Natural killer cell (primary cell): ENCODE measurements at regions of chr7 and their contacts with region 1.

Region 1: GRCh38 chr7:24907311-24907886 is 72.6 kb downstream of the OSBPL3 start:
- DNase-seq: peak in 1 of 2 donors; percentile 63
- ATAC-seq: peak; percentile 49 to 65 (median 60)
- H3K4me3 ChIP-seq: no peak overlapping the region
- H3K4me3 Mint-ChIP-seq: no peak overlapping the region
- H3K27ac ChIP-seq: peak overlapping the region; percentile 15
- H3K27ac Mint-ChIP-seq: no peak overlapping the region
- H3K4me1 ChIP-seq: peaks cover 57% of the 10 kb centered on the region
- H3K4me1 Mint-ChIP-seq: peaks cover 54 to 57% of the 10 kb centered on the region in 2 donors
- H3K27me3 ChIP-seq: no peaks in the 10 kb centered on the region
- H3K27me3 Mint-ChIP-seq: no peaks in the 10 kb centered on the region
- CTCF ChIP-seq: no peak

Region 2: DNA sequence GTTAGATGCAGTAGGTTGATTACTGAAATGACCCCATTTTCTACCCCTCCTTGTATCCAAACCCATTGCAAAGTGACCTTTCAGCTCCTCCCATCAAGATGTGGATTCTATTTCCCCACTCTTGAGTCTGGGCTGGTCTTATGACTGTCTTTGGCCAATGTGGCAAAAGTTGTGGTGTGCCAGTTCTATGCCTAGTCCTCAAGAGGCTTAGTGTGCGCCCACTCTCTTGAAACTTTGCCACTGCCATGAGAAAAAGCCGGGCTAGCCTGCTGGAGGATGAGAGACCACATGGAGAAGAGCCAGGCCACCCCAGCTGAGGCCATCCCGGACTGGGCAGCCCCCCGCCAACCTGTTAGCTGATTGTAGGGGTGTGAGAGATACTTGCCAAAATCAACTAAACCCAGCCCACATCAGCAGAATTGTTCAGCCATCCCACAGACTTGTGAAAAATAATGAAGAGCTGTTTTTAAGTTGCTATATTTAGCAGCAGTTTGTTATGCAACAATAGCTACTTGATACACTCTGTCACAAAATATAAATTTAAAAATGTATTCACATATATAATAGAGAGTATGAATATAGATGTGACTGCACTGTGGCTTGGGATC is 465.1 kb before region 1 on chr7:
- intact Hi-C with region 1: loop called (anchors 10 kb)
- DNase-seq: peak; percentile 30 to 47
- ATAC-seq: peak; percentile 79 to 84 (median 82)
- H3K4me3 ChIP-seq: no peak overlapping the region
- H3K4me3 Mint-ChIP-seq: peak overlapping the region; percentile 90
- H3K27ac ChIP-seq: peak overlapping the region; percentile 79
- H3K27ac Mint-ChIP-seq: peak overlapping the region; percentile 82 to 94
- H3K4me1 ChIP-seq: peaks cover 18% of the 10 kb centered on the region
- H3K4me1 Mint-ChIP-seq: peaks cover 32 to 40% of the 10 kb centered on the region in 2 donors
- H3K27me3 ChIP-seq: no peaks in the 10 kb centered on the region
- H3K27me3 Mint-ChIP-seq: no peaks in the 10 kb centered on the region
- CTCF ChIP-seq: no peak

Region 3: DNA sequence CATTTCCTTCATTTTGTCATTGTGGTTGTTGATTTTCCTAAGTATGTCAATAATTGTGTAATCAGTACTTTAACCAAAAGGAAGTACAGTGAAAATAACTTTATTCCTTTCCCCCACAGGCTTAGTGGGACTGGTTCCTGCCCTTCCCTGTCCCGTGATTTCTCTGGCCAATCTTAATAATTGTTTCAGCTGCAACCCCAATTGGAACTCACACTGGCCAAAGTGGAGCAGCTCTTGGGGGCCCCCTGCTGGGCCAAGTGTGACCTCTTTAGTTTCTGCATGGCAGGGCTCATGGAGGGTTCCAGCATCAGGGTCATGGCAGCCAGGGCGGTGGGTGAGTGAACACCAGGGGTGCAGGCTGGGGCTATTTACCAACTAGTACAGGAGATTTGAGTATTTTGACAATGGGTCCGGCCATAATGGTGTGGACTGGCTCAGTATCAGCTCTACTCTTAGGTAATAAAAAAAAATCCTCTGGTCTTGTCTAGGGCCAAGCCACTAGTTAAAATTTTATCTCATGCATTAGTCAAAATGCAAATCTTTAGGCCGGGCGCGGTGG is 185.9 kb after region 1 on chr7:
- intact Hi-C with region 1: loop called (anchors 10 kb)
- DNase-seq: peak; percentile 73 to 82
- ATAC-seq: peak; percentile 86 to 90 (median 90)
- H3K4me3 ChIP-seq: no peak overlapping the region
- H3K4me3 Mint-ChIP-seq: no peak overlapping the region
- H3K27ac ChIP-seq: no peak overlapping the region
- H3K27ac Mint-ChIP-seq: no peak overlapping the region
- H3K4me1 ChIP-seq: peaks cover 4% of the 10 kb centered on the region
- H3K4me1 Mint-ChIP-seq: peaks cover 6 to 7% of the 10 kb centered on the region in 2 donors
- H3K27me3 ChIP-seq: no peaks in the 10 kb centered on the region
- H3K27me3 Mint-ChIP-seq: peaks cover 0 to 3% of the 10 kb centered on the region in 2 donors
- CTCF ChIP-seq: peak; percentile 82